MCF 10A (cell line): ENCODE measurements at regions of chr2 and their contacts with region 1.

Region 1: GRCh38 chr2:46329803-46330775 is 32.9 kb downstream of the EPAS1 start:
- DNase-seq: peak; percentile 90
- H3K4me3 Mint-ChIP-seq: peak overlapping the region; percentile 51
- H3K27ac Mint-ChIP-seq: peak overlapping the region; percentile 95
- H3K4me1 Mint-ChIP-seq: peaks cover 92% of the 10 kb centered on the region
- H3K27me3 Mint-ChIP-seq: no peaks in the 10 kb centered on the region
- CTCF ChIP-seq: no peak

Region 2: GRCh38 chr2:46309052-46309952 is 20.8 kb before region 1 on chr2:
- CTCF ChIA-PET with region 1: interaction called, 10 read pairs
- POLR2A ChIA-PET with region 1: interaction called, 553 read pairs
- intact Hi-C with region 1: no loop called
- DNase-seq: peak; percentile 84
- H3K4me3 Mint-ChIP-seq: no peak overlapping the region
- H3K27ac Mint-ChIP-seq: peak overlapping the region; percentile 16
- H3K4me1 Mint-ChIP-seq: peaks cover 63% of the 10 kb centered on the region
- H3K27me3 Mint-ChIP-seq: no peaks in the 10 kb centered on the region
- CTCF ChIP-seq: no peak

Region 3: DNA sequence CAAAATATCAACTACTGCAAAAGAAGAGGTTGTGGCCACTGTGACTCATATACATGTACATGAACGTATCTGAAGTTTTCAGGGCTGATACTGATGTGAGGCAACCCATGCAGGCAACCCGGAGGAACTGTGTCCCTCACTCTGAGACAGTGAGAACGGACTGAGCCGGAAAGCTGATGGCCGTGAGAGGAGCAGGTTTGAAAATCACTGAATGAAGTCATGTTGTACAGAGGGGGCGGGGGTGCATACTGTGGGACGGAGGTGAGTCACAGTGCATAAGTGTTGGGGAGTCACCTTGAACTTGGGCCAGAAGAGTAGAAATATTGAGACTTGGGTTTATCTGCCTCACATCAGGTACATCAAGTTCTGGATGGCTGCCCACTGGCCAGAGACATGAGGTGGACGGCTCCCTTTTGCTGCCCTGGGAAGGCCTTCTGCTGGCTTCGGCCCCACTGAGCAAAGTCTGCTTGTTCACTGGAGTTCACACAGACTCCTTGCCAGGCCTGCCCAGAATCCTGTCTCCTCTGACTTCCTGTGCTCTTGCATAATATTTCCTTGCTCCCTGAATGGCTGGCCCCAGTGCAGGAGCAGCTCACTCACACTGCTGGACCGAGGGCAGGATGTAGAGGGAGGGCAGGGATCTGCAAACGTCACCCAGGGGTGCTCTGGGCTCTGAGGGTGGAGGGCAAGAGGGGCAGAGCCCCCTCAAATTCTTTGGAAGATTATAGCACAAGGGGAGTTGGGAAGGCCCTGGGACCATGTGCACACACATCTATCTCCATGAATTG is 14.8 kb before region 1 on chr2:
- CTCF ChIA-PET with region 1: interaction called, 10 read pairs
- POLR2A ChIA-PET with region 1: interaction called, 553 read pairs
- intact Hi-C with region 1: loop called (anchors 1 kb)
- DNase-seq: peak; percentile 100
- H3K4me3 Mint-ChIP-seq: peak overlapping the region; percentile 26
- H3K27ac Mint-ChIP-seq: peak overlapping the region; percentile 46
- H3K4me1 Mint-ChIP-seq: peaks cover 64% of the 10 kb centered on the region
- H3K27me3 Mint-ChIP-seq: no peaks in the 10 kb centered on the region
- CTCF ChIP-seq: no peak